PC-9 (cell line): ENCODE measurements at regions of chr15 and their contacts with region 1.

Region 1: GRCh38 chr15:54064365-54064764 is 86.1 kb downstream of the UNC13C start:
- DNase-seq: no peak
- H3K4me3 ChIP-seq: no peak overlapping the region
- H3K27ac ChIP-seq: no peak overlapping the region
- H3K4me1 ChIP-seq: no peaks in the 10 kb centered on the region
- H3K27me3 ChIP-seq: no peaks in the 10 kb centered on the region
- CTCF ChIP-seq: no peak

Region 2: GRCh38 chr15:52844823-52845222 is 1219.5 kb before region 1 on chr15:
- CTCF ChIA-PET with region 1: no interaction called
- POLR2A ChIA-PET with region 1: no interaction called
- intact Hi-C with region 1: no loop called
- DNase-seq: no peak
- H3K4me3 ChIP-seq: no peak overlapping the region
- H3K27ac ChIP-seq: no peak overlapping the region
- H3K4me1 ChIP-seq: no peaks in the 10 kb centered on the region
- H3K27me3 ChIP-seq: no peaks in the 10 kb centered on the region
- CTCF ChIP-seq: no peak

Region 3: DNA sequence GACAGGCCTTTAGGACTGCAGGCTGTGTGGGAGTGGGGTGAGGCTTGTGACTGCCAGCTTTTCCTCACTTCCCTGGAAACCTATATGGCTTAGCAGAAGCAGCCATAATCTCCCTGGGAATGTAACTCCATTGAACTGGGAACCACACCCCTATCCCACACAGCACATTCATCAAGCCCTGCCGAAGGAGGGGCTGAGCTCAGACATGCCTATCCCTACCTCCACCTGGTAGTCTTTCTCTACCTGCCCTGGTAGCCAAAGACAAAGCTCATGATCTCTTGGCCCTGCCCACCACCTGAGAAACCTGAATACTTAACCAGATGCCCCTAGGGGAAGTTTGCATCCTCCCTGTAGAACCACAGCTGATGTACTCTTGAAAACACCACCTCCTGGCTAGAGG is 133.6 kb after region 1 on chr15:
- CTCF ChIA-PET with region 1: no interaction called
- POLR2A ChIA-PET with region 1: no interaction called
- intact Hi-C with region 1: loop called (anchors 5 kb)
- DNase-seq: no peak
- H3K4me3 ChIP-seq: no peak overlapping the region
- H3K27ac ChIP-seq: no peak overlapping the region
- H3K4me1 ChIP-seq: no peaks in the 10 kb centered on the region
- H3K27me3 ChIP-seq: no peaks in the 10 kb centered on the region
- CTCF ChIP-seq: no peak